Activated CD4-positive, alpha-beta memory T cell treated with anti-CD3 and anti-CD28 coated beads for 36 hours (primary cell): ENCODE measurements at regions of chr9 and their contacts with region 1.

Region 1: DNA sequence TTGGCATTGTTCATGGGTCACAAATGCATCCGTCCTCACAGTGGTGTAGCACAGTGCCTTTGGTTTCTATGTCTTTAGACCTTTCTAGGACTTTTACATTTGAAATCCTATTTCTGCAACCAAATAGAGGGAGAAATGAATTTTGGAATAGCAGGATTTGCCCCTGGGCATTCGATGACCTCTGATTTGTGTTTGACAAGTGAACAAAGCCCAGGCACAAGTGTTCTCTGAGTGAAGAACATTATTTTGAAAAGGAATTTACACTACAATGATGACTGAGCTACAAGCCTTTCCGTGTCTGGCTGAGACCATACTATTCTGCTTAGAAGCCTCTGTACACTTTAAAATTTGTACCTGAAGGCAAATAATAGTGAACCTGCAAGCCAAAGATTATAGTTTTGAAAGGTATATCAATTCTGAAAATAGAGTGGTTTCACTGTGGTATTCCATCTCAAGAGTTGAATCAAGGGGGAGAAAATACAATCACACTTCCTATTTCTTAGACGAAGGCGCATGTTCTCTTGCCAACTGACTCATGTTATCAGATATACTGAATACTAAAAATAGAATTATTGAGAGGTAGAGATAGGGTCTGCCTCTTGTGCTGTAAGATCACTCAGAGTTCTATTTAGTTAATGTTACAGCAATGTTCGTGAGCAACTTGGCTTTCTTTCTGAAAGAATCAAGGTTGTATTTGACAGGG is 297.6 kb downstream of the KDM4C start:
- DNase-seq: no peak
- H3K4me3 Mint-ChIP-seq: no peak overlapping the region
- H3K27ac Mint-ChIP-seq: no peak overlapping the region
- H3K4me1 Mint-ChIP-seq: peaks cover 10% of the 10 kb centered on the region
- H3K27me3 Mint-ChIP-seq: no peaks in the 10 kb centered on the region

Region 2: GRCh38 chr9:7011395-7012067 is 43.8 kb before region 1 on chr9:
- CTCF ChIA-PET with region 1: no interaction called
- POLR2A ChIA-PET with region 1: no interaction called
- intact Hi-C with region 1: no loop called
- DNase-seq: no peak
- H3K4me3 Mint-ChIP-seq: no peak overlapping the region
- H3K27ac Mint-ChIP-seq: no peak overlapping the region
- H3K4me1 Mint-ChIP-seq: no peaks in the 10 kb centered on the region
- H3K27me3 Mint-ChIP-seq: no peaks in the 10 kb centered on the region

Region 3: GRCh38 chr9:7186175-7186574 is 130.8 kb after region 1 on chr9:
- CTCF ChIA-PET with region 1: interaction called, 8 read pairs
- POLR2A ChIA-PET with region 1: no interaction called
- intact Hi-C with region 1: loop called (anchors 1 kb)
- DNase-seq: peak; percentile 13
- H3K4me3 Mint-ChIP-seq: no peak overlapping the region
- H3K27ac Mint-ChIP-seq: no peak overlapping the region
- H3K4me1 Mint-ChIP-seq: no peaks in the 10 kb centered on the region
- H3K27me3 Mint-ChIP-seq: no peaks in the 10 kb centered on the region

Region 4: GRCh38 chr9:7534211-7534935 is 479.0 kb after region 1 on chr9:
- CTCF ChIA-PET with region 1: interaction called, 14 read pairs
- POLR2A ChIA-PET with region 1: no interaction called
- intact Hi-C with region 1: no loop called
- DNase-seq: peak; percentile 23
- H3K4me3 Mint-ChIP-seq: no peak overlapping the region
- H3K27ac Mint-ChIP-seq: peak overlapping the region; percentile 31
- H3K4me1 Mint-ChIP-seq: peaks cover 13% of the 10 kb centered on the region
- H3K27me3 Mint-ChIP-seq: peaks cover 16% of the 10 kb centered on the region